HCT116 (cell line): ENCODE measurements at regions of chr17 and their contacts with region 1.

Region 1: DNA sequence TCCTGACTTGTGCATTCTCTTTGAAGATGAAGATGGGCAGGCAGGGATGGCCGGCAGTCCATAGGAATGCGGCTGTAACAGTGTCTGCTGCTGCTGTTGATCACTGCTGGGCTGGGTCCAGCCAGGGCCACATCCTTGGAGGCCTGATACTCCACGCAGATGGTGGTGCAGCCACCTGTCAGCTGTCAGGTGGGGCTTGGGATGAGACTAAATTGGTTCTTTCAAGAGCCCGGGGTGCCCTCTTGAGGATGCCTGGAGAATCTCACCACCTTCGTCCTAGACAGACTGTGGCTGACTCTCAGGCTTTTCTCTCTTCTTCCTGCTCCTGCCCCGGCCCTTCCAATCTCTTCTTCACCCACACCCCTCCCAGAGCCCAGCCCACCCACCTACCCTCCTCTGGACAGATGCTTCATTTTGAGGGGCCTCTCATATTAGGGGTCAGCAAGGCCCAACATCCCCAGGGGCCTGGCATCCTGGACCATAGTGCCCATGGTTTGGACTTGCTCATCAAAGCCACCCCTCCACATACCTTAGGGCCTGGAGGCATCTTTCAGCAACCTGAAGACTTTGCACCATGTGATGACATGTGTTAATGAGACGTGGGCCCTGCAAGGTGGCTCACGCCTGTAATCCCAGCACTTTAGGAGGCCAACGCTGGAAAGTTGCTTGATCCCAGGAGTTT is 19.1 kb downstream of the OSBPL7 start:
- DNase-seq: peak; percentile 68
- ATAC-seq: peak; percentile 99
- H3K4me3 ChIP-seq: no peak overlapping the region
- H3K27ac ChIP-seq: no peak overlapping the region
- H3K4me1 ChIP-seq: no peaks in the 10 kb centered on the region
- H3K27me3 ChIP-seq: peaks cover 11% of the 10 kb centered on the region; the same call in 1 of the 2 replicates
- CTCF ChIP-seq: peak; percentile 77 to 90 (median 89)
- POLR2A ChIP-seq: no peak
- RAD21 ChIP-seq: peak; percentile 94

Region 2: DNA sequence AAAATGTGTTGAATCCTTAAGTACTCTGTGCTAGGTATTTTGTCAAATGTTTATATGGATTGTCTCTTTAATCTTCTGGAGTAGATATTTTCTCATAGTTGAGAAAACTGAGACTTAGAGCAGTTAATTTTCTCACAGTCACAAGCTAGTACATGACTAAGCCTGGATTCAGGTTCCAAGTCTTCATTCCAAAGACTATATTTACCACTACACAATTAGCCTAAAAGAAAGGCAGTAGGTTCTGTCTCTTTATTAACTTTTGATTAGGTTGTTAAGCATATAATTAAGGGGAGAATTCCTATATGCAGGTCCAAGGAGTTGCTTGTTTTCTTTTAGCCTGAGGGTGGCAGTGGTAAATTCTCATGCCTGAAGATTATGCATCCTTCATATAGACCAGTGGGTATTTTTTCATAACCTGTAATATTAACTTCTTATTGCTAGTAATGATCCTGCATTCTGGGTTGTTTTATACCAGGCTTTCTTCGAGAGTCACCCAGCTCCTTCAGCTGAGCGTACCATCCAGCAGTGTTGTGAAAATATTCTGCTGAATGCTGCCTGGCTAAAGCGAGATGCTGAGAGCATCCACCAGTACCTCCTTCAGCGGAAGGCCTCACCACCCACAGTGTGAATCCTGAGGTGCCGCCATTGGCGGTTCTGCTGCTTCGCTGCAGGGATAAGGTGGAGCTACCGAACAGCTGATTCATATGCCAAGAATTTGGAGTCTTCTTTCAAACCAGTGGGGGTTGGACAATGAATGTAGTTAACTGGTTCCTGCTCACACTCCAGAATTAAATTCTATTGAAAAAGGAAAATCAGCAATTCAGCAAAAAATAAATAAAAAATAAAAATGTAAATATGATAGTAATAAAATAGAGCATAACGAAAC is 180.9 kb before region 1 on chr17:
- CTCF ChIA-PET with region 1: no interaction called
- POLR2A ChIA-PET with region 1: no interaction called
- RAD21 ChIA-PET with region 1: no interaction called
- intact Hi-C with region 1: loop called (anchors 1 kb)
- DNase-seq: peak; percentile 82
- ATAC-seq: peak; percentile 93
- H3K4me3 ChIP-seq: peak overlapping the region in 1 of 2 experiments; percentile 22; a peak in 1 of 4 replicates
- H3K27ac ChIP-seq: peak overlapping the region; percentile 62
- H3K4me1 ChIP-seq: peaks cover 32 to 46% of the 10 kb centered on the region in 2 experiments
- H3K27me3 ChIP-seq: no peaks in the 10 kb centered on the region
- CTCF ChIP-seq: peak in 2 of 3 experiments; percentile 22 to 27; a peak in 3 of 6 replicates
- POLR2A ChIP-seq: no peak
- RAD21 ChIP-seq: 0 out of 2 replicates have a peak, but pooled peaks have one; percentile 15

Region 3: GRCh38 chr17:47652570-47652969 is 149.9 kb before region 1 on chr17:
- CTCF ChIA-PET with region 1: no interaction called
- POLR2A ChIA-PET with region 1: no interaction called
- RAD21 ChIA-PET with region 1: no interaction called
- intact Hi-C with region 1: no loop called
- DNase-seq: no peak
- ATAC-seq: no peak
- H3K4me3 ChIP-seq: no peak overlapping the region
- H3K27ac ChIP-seq: no peak overlapping the region
- H3K4me1 ChIP-seq: peaks cover 14 to 21% of the 10 kb centered on the region in 2 experiments; a peak in 3 of 4 replicates
- H3K27me3 ChIP-seq: no peaks in the 10 kb centered on the region
- CTCF ChIP-seq: no peak
- POLR2A ChIP-seq: no peak
- RAD21 ChIP-seq: no peak

Region 4: GRCh38 chr17:47663912-47664625 is 138.4 kb before region 1 on chr17:
- CTCF ChIA-PET with region 1: interaction called, 3 read pairs
- POLR2A ChIA-PET with region 1: no interaction called
- RAD21 ChIA-PET with region 1: no interaction called
- intact Hi-C with region 1: loop called (anchors 1 kb)
- DNase-seq: peak; percentile 48
- ATAC-seq: peak; percentile 88
- H3K4me3 ChIP-seq: no peak overlapping the region
- H3K27ac ChIP-seq: 0 out of 2 replicates have a peak overlapping the region, but pooled peaks have one; percentile 0
- H3K4me1 ChIP-seq: no peaks in the 10 kb centered on the region
- H3K27me3 ChIP-seq: no peaks in the 10 kb centered on the region
- CTCF ChIP-seq: peak; percentile 71 to 97 (median 87)
- POLR2A ChIP-seq: no peak
- RAD21 ChIP-seq: peak; percentile 74

Region 5: GRCh38 chr17:47698749-47699535 is 103.5 kb before region 1 on chr17:
- CTCF ChIA-PET with region 1: interaction called, 5 read pairs
- POLR2A ChIA-PET with region 1: no interaction called
- RAD21 ChIA-PET with region 1: no interaction called
- intact Hi-C with region 1: loop called (anchors 1 kb)
- DNase-seq: no peak
- ATAC-seq: peak; percentile 68
- H3K4me3 ChIP-seq: no peak overlapping the region
- H3K27ac ChIP-seq: no peak overlapping the region
- H3K4me1 ChIP-seq: peaks cover 5 to 11% of the 10 kb centered on the region in 2 experiments; a peak in 2 of 4 replicates
- H3K27me3 ChIP-seq: no peaks in the 10 kb centered on the region
- CTCF ChIP-seq: peak in 2 of 3 experiments; percentile 98 to 100; a peak in 5 of 6 replicates
- POLR2A ChIP-seq: no peak
- RAD21 ChIP-seq: peak; percentile 72

Region 6: DNA sequence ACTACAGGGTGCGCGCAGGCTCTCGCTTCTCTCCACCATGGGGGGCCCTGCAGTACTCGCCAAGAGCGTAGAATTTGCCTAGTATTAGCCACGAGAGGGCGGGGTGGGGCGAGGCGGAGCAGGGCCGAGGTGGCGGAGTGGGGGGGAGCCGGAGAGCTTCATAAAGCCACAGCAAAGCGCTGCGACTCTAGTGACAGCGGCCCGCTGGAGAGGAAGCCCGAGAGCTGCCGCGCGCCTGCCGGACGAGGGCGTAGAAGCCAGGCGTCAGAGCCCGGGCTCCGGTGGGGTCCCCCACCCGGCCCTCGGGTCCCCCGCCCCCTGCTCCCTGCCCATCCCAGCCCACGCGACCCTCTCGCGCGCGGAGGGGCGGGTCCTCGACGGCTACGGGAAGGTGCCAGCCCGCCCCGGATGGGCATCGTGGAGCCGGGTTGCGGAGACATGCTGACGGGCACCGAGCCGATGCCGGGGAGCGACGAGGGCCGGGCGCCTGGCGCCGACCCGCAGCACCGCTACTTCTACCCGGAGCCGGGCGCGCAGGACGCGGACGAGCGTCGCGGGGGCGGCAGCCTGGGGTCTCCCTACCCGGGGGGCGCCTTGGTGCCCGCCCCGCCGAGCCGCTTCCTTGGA is 69.3 kb before region 1 on chr17 and contains the start of gene TBX21:
- CTCF ChIA-PET with region 1: no interaction called
- POLR2A ChIA-PET with region 1: no interaction called
- RAD21 ChIA-PET with region 1: no interaction called
- intact Hi-C with region 1: loop called (anchors 5 kb)
- DNase-seq: peak; percentile 44
- ATAC-seq: peak; percentile 97
- H3K4me3 ChIP-seq: peak within 1 kb of the TSS in 1 of 2 experiments; percentile 19; a peak in 1 of 4 replicates
- H3K27ac ChIP-seq: no peak within 1 kb of the TSS
- H3K4me1 ChIP-seq: peaks cover 0 to 9% of the 10 kb centered on the region in 2 experiments; a peak in 2 of 4 replicates
- H3K27me3 ChIP-seq: peaks cover 6% of the 10 kb centered on the region; the same call in 1 of the 2 replicates
- CTCF ChIP-seq: peak; percentile 41 to 49 (median 49); a peak in 4 of 6 replicates
- POLR2A ChIP-seq: no peak
- RAD21 ChIP-seq: no peak
- total RNA-seq, gene TBX21: 0.20 TPM

Region 7: GRCh38 chr17:47776330-47777197 is 25.9 kb before region 1 on chr17:
- CTCF ChIA-PET with region 1: no interaction called
- POLR2A ChIA-PET with region 1: no interaction called
- RAD21 ChIA-PET with region 1: no interaction called
- intact Hi-C with region 1: loop called (anchors 1 kb)
- DNase-seq: peak; percentile 54
- ATAC-seq: peak; percentile 94
- H3K4me3 ChIP-seq: no peak overlapping the region
- H3K27ac ChIP-seq: no peak overlapping the region
- H3K4me1 ChIP-seq: no peaks in the 10 kb centered on the region
- H3K27me3 ChIP-seq: peaks cover 22% of the 10 kb centered on the region; the same call in 1 of the 2 replicates
- CTCF ChIP-seq: peak; percentile 84 to 88 (median 86)
- POLR2A ChIP-seq: no peak
- RAD21 ChIP-seq: peak; percentile 84